ENCODE measurements at regions of chr19 and their contacts with region 1.

Region 1: GRCh38 chr19:51097166-51097738 is 11.0 kb downstream of the CTU1 start:
- DNase-seq: peak; percentile 67 to 78
- ATAC-seq: peak; percentile 59 to 70 (median 61)
- H3K4me3 ChIP-seq: no peak overlapping the region
- H3K4me3 Mint-ChIP-seq: peak overlapping the region; percentile 21
- H3K27ac ChIP-seq: no peak overlapping the region
- H3K27ac Mint-ChIP-seq: peak overlapping the region in 1 of 2 donors; percentile 14
- H3K4me1 ChIP-seq: peaks cover 29% of the 10 kb centered on the region
- H3K4me1 Mint-ChIP-seq: peaks cover 19 to 26% of the 10 kb centered on the region in 2 donors
- H3K27me3 ChIP-seq: no peaks in the 10 kb centered on the region
- H3K27me3 Mint-ChIP-seq: no peaks in the 10 kb centered on the region
- CTCF ChIP-seq: peak; percentile 47

Region 2: DNA sequence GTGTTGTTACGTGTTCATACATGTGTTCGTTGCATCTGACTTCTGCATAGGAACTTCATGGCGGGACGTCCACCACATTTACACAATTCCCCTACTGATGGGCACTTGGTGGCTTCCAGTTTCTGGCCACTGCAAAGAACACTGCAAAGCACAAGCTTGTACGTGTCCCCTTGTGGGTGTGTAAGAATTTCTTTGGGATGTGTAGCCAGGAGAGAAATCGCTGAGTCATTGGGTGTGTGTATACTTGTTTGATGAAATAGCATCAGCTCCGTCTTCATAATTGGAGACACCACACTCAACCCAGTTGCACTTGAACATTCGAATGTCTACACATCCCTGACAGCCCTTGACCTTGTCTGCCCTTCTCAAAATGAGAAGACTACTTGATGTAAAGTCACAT is 163.6 kb before region 1 on chr19:
- intact Hi-C with region 1: loop called (anchors 10 kb)
- DNase-seq: no peak
- ATAC-seq: no peak
- H3K4me3 ChIP-seq: no peak overlapping the region
- H3K4me3 Mint-ChIP-seq: no peak overlapping the region
- H3K27ac ChIP-seq: no peak overlapping the region
- H3K27ac Mint-ChIP-seq: no peak overlapping the region
- H3K4me1 ChIP-seq: no peaks in the 10 kb centered on the region
- H3K4me1 Mint-ChIP-seq: peaks cover 0 to 4% of the 10 kb centered on the region in 2 donors
- H3K27me3 ChIP-seq: no peaks in the 10 kb centered on the region
- H3K27me3 Mint-ChIP-seq: peaks cover 22 to 25% of the 10 kb centered on the region in 2 donors
- CTCF ChIP-seq: no peak

Region 3: DNA sequence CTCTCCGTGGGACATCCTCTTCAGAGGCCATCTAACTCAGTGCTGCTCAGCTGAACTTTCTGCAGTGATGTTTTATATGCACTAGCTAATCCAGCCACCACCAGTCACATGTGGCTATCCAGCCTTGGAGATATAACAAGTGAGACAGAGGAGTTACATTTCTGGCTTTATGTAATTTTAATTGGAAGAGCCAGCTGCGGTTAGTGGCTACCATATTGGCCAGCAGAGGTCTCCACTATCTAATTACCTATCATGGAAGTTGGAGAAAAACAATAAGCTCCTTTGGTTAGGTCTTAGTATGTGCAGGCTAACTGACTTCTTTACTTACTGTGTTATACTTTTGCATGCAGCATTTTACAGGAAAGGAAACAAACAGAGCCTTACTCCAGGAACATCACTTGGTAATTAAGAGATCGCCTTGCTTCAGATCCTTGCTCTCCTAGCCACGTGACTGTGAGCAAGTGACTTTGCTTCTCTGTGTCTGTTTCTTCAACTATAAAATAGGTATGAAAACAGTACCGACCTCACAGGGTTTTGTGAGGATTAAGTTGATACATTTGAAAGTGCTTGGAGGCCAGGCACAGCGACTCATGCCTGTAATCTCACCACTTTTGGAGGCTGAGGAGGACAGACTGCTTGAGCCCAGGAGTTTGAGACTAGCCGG is 76.1 kb before region 1 on chr19:
- intact Hi-C with region 1: loop called (anchors 5 kb)
- DNase-seq: peak in 1 of 2 donors; percentile 50
- ATAC-seq: peak in 2 of 3 donors; percentile 24 to 37
- H3K4me3 ChIP-seq: no peak overlapping the region
- H3K4me3 Mint-ChIP-seq: no peak overlapping the region
- H3K27ac ChIP-seq: no peak overlapping the region
- H3K27ac Mint-ChIP-seq: no peak overlapping the region
- H3K4me1 ChIP-seq: peaks cover 28% of the 10 kb centered on the region
- H3K4me1 Mint-ChIP-seq: peaks cover 17 to 23% of the 10 kb centered on the region in 2 donors
- H3K27me3 ChIP-seq: peaks cover 26% of the 10 kb centered on the region
- H3K27me3 Mint-ChIP-seq: peaks cover 30 to 37% of the 10 kb centered on the region in 2 donors
- CTCF ChIP-seq: peak; percentile 48